PC-3 (cell line): ENCODE measurements at regions of chr7 and their contacts with region 1.

Region 1: GRCh38 chr7:147578196-147578595 is 1012.4 kb upstream of the C7orf33 start:
- DNase-seq: peak; percentile 77
- ATAC-seq: peak; percentile 62
- H3K4me3 ChIP-seq: no peak overlapping the region
- H3K27ac ChIP-seq: peak overlapping the region; percentile 42
- H3K4me1 ChIP-seq: peaks cover 38% of the 10 kb centered on the region
- H3K27me3 ChIP-seq: no peaks in the 10 kb centered on the region
- CTCF ChIP-seq: no peak

Region 2: DNA sequence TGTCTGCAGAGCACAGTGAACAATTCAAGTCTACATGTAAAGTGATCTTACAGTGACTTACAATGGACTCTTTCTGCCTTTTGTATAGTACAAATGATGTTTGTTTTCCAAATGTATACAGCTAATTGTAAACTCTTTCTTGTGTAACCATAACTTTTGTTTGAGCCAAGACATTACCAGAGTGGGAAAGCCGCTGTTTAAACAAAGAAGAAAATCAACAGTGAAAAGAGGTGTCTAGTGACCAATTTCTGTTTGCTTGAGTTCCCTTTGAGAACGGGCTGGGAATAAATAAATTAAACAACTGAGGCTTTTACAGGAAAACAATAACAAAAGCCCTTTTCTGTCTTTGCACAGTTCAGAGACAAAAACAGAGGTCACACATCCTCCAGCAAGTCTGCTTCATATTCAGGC is 298.2 kb before region 1 on chr7:
- CTCF ChIA-PET with region 1: no interaction called
- POLR2A ChIA-PET with region 1: no interaction called
- intact Hi-C with region 1: loop called (anchors 5 kb)
- DNase-seq: no peak
- ATAC-seq: peak; percentile 48
- H3K4me3 ChIP-seq: peak overlapping the region; percentile 41
- H3K27ac ChIP-seq: peak overlapping the region; percentile 42
- H3K4me1 ChIP-seq: peaks cover 30% of the 10 kb centered on the region
- H3K27me3 ChIP-seq: no peaks in the 10 kb centered on the region
- CTCF ChIP-seq: no peak

Region 3: GRCh38 chr7:147432079-147432478 is 146.1 kb before region 1 on chr7:
- CTCF ChIA-PET with region 1: no interaction called
- POLR2A ChIA-PET with region 1: no interaction called
- intact Hi-C with region 1: loop called (anchors 5 kb)
- DNase-seq: peak; percentile 56
- ATAC-seq: peak; percentile 26; the same call in 1 of the 2 replicates
- H3K4me3 ChIP-seq: no peak overlapping the region
- H3K27ac ChIP-seq: no peak overlapping the region
- H3K4me1 ChIP-seq: peaks cover 17% of the 10 kb centered on the region
- H3K27me3 ChIP-seq: no peaks in the 10 kb centered on the region
- CTCF ChIP-seq: peak; percentile 74

Region 4: GRCh38 chr7:147595042-147595441 is 16.8 kb after region 1 on chr7:
- CTCF ChIA-PET with region 1: no interaction called
- POLR2A ChIA-PET with region 1: no interaction called
- intact Hi-C with region 1: loop called (anchors 1 kb)
- DNase-seq: peak; percentile 63
- ATAC-seq: peak; percentile 99
- H3K4me3 ChIP-seq: no peak overlapping the region
- H3K27ac ChIP-seq: no peak overlapping the region
- H3K4me1 ChIP-seq: peaks cover 13% of the 10 kb centered on the region
- H3K27me3 ChIP-seq: no peaks in the 10 kb centered on the region
- CTCF ChIP-seq: no peak

Region 5: GRCh38 chr7:147771344-147771743 is 193.1 kb after region 1 on chr7:
- CTCF ChIA-PET with region 1: no interaction called
- POLR2A ChIA-PET with region 1: no interaction called
- intact Hi-C with region 1: no loop called
- DNase-seq: no peak
- ATAC-seq: no peak
- H3K4me3 ChIP-seq: no peak overlapping the region
- H3K27ac ChIP-seq: no peak overlapping the region
- H3K4me1 ChIP-seq: peaks cover 10% of the 10 kb centered on the region
- H3K27me3 ChIP-seq: no peaks in the 10 kb centered on the region
- CTCF ChIP-seq: no peak